PC-3 (cell line): ENCODE measurements at regions of chr16 and their contacts with region 1.

Region 1: DNA sequence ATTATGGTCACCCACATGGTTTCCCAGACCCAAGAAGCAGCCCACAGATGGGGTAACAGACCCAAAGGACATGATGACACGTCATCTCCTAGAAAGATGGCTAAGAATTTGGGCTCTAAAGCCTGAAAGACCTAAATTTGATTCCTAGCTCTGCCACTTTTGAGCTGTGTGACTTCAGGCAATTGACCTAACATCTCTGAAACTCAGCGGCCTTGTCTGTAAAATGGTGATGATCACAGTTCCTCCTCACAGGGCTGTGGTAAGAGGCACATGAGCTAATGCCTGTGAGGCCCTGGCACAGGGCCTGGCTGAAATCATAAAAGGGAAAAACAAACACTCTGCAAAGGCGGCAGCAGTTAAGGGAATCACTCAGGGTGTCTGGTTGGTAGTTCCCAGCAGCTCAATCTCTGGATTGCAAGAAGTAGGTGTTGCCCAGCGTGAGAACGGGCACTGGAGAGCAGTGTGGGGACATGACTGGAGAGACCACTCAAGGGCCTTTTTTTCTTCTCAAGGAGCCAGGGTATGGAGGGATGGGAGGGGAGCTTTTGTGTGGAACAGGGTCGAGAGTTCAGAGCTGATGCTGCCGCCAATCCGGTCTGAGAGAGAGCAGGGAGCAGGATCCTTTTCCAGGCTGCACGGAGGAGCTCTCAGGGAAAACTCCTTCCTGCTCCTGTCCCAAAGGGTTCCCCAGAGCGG is 15.0 kb downstream of the SCNN1B start:
- DNase-seq: peak; percentile 34
- ATAC-seq: peak; percentile 90
- H3K4me3 ChIP-seq: no peak overlapping the region
- H3K27ac ChIP-seq: no peak overlapping the region
- H3K4me1 ChIP-seq: no peaks in the 10 kb centered on the region
- H3K27me3 ChIP-seq: no peaks in the 10 kb centered on the region
- CTCF ChIP-seq: no peak

Region 2: DNA sequence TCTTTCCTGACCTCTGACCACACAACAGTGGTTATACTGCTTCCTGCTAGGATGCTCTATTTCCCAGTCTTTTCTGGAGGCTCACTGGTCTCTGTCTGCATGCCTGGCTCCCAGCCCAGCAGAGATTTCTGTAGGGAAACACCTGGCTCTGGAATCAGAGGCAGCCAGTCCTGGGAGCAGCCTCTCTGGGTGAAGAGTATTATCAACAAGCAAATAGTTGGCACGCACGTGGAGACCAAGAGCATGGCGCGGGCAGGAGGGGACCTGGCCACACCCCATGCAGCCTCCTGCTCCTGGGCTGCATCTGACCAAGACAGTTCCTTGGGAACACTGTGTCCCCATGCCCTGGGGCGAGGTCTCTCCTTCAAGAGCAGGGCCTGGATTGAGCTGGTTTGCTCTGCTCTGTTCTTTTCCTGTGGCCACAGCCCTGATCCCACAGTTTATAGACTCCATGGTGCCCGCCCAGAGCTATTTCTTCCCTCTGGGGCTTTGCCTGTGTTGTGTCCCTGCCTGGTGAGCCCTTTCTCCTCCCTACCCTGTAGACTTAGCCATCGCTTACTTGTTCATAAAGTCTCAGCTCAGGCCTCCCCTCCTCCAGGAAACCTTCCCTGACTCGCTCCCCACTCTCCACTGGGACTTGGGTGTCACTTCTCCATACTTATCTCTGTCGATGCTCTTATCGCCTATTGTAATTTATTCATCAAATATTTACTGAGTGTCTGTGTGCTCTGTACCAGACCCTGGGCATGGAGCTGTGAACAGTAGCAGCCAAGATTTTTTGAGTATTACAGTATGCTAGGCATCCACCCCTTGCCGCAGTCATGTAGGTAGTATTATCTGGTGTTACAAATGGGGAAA is 45.6 kb after region 1 on chr16:
- CTCF ChIA-PET with region 1: no interaction called
- POLR2A ChIA-PET with region 1: no interaction called
- intact Hi-C with region 1: loop called (anchors 10 kb)
- DNase-seq: peak; percentile 39
- ATAC-seq: peak; percentile 27
- H3K4me3 ChIP-seq: no peak overlapping the region
- H3K27ac ChIP-seq: no peak overlapping the region
- H3K4me1 ChIP-seq: peaks cover 14% of the 10 kb centered on the region
- H3K27me3 ChIP-seq: no peaks in the 10 kb centered on the region
- CTCF ChIP-seq: no peak